A549 (cell line): ENCODE measurements at regions of chr17 and their contacts with region 1.

Region 1: DNA sequence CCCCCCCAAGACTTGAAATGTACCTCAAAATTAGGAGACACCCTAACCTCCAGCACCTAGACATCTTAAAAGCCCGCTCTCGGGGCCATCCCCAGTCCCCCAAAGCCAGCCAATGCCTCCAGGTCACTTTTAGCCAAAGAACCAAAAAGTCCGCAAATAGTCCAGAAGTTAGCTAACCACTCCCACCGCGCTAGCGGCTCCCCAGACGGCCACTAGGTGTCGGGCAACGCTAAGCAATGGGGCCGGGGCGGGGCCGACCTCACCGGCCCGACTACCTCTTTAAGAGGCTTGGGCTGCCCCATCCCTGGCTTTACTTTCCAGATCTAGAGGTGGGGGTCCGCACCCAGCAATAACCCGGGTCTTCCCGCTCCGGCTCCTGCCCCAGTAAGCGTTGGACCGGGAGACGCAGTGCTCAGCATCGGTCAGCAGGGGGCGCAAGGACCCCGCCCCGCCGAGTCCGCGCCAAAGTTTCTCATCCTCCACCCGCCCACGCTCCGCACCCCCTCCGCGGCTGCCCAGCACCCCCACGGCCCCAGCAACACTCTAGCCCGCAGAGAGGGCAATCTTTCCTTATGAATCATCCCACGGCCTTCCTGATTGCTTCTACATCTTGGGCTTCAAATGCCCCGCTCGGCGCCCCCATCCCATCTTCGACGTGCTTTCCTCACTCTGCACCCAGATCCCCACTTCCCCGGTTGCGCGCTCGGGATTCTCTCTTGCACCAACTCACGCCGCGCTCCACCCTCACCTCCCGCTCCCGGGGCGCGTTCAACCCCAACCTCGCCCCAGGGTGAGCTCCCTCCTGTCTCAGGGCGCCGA is 765 bp downstream of the COL1A1 start:
- DNase-seq: peak; percentile 90 to 95
- ATAC-seq: peak; percentile 74 to 86
- H3K4me3 ChIP-seq: peak overlapping the region; percentile 47
- H3K27ac ChIP-seq: peak overlapping the region; percentile 77 to 90
- H3K4me1 ChIP-seq: peaks cover 44% of the 10 kb centered on the region
- CTCF ChIP-seq: peak; percentile 100
- EP300 ChIP-seq: no peak
- POLR2A ChIP-seq: no peak
- RAD21 ChIP-seq: peak; percentile 94 to 100

Region 2: DNA sequence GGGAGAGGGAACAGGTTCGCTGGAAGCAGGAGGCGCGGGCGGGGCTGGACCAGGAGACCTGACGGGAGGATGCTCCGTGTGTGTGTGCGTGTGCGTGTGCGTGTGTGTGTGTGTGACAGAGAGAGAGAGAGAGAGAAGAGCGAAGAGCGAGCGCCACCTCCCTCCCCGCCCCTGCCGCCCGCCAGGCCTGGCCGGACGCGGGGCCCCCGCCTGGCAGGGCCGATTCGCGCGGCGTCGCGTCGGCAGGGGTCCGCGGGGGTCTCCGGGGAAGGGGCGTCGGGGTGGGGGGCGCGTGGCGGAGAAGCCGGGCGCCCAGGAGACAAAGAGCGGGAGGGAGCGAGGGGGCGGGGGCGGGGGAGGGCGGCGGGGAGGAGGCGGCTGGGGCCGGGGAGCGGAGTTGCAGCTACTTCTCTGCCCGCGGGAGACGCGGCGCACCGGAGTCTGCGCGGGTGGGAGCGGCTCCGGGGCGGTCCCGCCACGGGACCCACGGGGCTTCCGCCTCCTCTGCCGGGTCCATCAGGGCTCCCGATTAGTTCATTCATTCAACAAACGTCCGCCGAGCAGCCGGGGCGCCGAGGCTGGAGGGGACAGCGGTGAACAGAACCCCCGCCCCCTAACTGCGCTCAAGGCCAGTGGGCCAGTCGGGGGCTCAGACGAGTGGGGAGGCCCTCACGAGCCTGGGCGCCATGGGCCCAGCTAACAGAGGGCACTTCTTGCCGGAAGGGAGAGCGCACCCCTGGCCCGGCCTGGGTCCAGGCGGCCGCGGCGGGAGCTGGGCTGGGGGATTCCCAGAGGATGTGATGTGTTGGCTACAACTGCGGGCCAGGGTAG is 70.7 kb before region 1 on chr17 and contains the start of gene SAMD14:
- CTCF ChIA-PET with region 1: interaction called, 12 read pairs
- POLR2A ChIA-PET with region 1: no interaction called
- DNase-seq: peak; percentile 66 to 74
- ATAC-seq: peak; percentile 44 to 46; a peak in 4 of 6 replicates
- H3K4me3 ChIP-seq: peak within 1 kb of the TSS; percentile 63
- H3K27ac ChIP-seq: peak within 1 kb of the TSS; percentile 67 to 89
- H3K4me1 ChIP-seq: peaks cover 47% of the 10 kb centered on the region
- CTCF ChIP-seq: no peak
- EP300 ChIP-seq: no peak
- POLR2A ChIP-seq: no peak
- RAD21 ChIP-seq: no peak
- polyA plus RNA-seq, gene SAMD14: 0.12 and 0.15 TPM in 2 replicates

Region 3: GRCh38 chr17:50177983-50178834 is 22.5 kb before region 1 on chr17:
- CTCF ChIA-PET with region 1: interaction called, 817 read pairs
- POLR2A ChIA-PET with region 1: interaction called, 11 read pairs
- DNase-seq: peak; percentile 98
- ATAC-seq: peak; percentile 86 to 93
- H3K4me3 ChIP-seq: no peak overlapping the region
- H3K27ac ChIP-seq: peak overlapping the region; percentile 90 to 95
- H3K4me1 ChIP-seq: peaks cover 61% of the 10 kb centered on the region
- CTCF ChIP-seq: peak; percentile 86
- EP300 ChIP-seq: peak; percentile 67 to 71; a peak in 3 of 5 replicates
- POLR2A ChIP-seq: peak; percentile 73
- RAD21 ChIP-seq: peak; percentile 62 to 69

Region 4: GRCh38 chr17:50221864-50222545 is 21.3 kb after region 1 on chr17:
- CTCF ChIA-PET with region 1: interaction called, 401 read pairs
- POLR2A ChIA-PET with region 1: no interaction called
- DNase-seq: no peak
- ATAC-seq: no peak
- H3K4me3 ChIP-seq: no peak overlapping the region
- H3K27ac ChIP-seq: peak overlapping the region in 1 of 2 experiments; percentile 87; a peak in 3 of 6 replicates
- H3K4me1 ChIP-seq: peaks cover 43% of the 10 kb centered on the region
- CTCF ChIP-seq: no peak
- EP300 ChIP-seq: no peak
- POLR2A ChIP-seq: no peak
- RAD21 ChIP-seq: no peak

Region 5: GRCh38 chr17:50269477-50270434 is 69.1 kb after region 1 on chr17:
- CTCF ChIA-PET with region 1: interaction called, 1,255 read pairs
- POLR2A ChIA-PET with region 1: interaction called, 24 read pairs
- DNase-seq: peak; percentile 79 to 91
- ATAC-seq: peak; percentile 58 to 66
- H3K4me3 ChIP-seq: no peak overlapping the region
- H3K27ac ChIP-seq: peak overlapping the region in 1 of 2 experiments; percentile 36; a peak in 3 of 6 replicates
- H3K4me1 ChIP-seq: peaks cover 47% of the 10 kb centered on the region
- CTCF ChIP-seq: peak; percentile 93
- EP300 ChIP-seq: no peak
- POLR2A ChIP-seq: no peak
- RAD21 ChIP-seq: peak; percentile 79 to 90

Region 6: GRCh38 chr17:50318501-50319285 is 118.0 kb after region 1 on chr17:
- CTCF ChIA-PET with region 1: interaction called, 37 read pairs
- POLR2A ChIA-PET with region 1: no interaction called
- DNase-seq: no peak
- ATAC-seq: 0 out of 6 replicates have a peak, but pooled peaks of 1 of the 2 experiments have one; percentile 19
- H3K4me3 ChIP-seq: no peak overlapping the region
- H3K27ac ChIP-seq: no peak overlapping the region
- H3K4me1 ChIP-seq: no peaks in the 10 kb centered on the region
- CTCF ChIP-seq: no peak
- EP300 ChIP-seq: no peak
- POLR2A ChIP-seq: no peak
- RAD21 ChIP-seq: no peak